Ascending aorta (tissue), 2 donors: ENCODE measurements at regions of chr5 and their contacts with region 1.

Region 1: DNA sequence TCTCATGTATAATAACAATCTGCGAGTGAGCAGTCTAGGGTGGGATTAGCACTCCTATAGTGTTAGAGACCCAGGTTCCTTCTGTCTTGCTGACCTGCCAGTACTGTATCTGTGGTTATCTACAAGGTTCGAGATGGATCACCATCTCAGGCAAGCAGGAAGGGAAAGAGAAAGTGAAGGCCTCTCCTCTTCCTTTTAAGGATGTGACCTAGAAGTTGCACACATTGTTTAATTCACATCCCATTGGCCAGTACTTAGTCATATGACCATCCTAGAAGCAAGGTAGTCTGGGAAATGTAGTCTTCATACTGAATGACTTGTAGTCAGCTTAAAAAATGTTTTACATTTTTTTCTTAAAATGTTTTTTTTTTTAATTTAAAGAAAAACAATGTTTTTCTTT is 168.6 kb downstream of the CARTPT start:
- DNase-seq: no peak
- H3K4me3 ChIP-seq: no peak overlapping the region
- H3K27ac ChIP-seq: peak overlapping the region in 1 of 2 donors; percentile 27
- H3K4me1 ChIP-seq: peaks cover 3 to 10% of the 10 kb centered on the region in 2 donors
- H3K27me3 ChIP-seq: no peaks in the 10 kb centered on the region
- CTCF ChIP-seq: no peak

Region 2: GRCh38 chr5:71830681-71831539 is 56.8 kb before region 1 on chr5:
- intact Hi-C with region 1: loop called (anchors 10 kb)
- DNase-seq: peak; percentile 48 to 95
- H3K4me3 ChIP-seq: peak overlapping the region in 1 of 2 donors; percentile 34
- H3K27ac ChIP-seq: peak overlapping the region; percentile 75 to 92
- H3K4me1 ChIP-seq: peaks cover 6 to 22% of the 10 kb centered on the region in 2 donors
- H3K27me3 ChIP-seq: no peaks in the 10 kb centered on the region
- CTCF ChIP-seq: no peak

Region 3: GRCh38 chr5:71905834-71906711 is 18.4 kb after region 1 on chr5:
- intact Hi-C with region 1: no loop called
- DNase-seq: no peak
- H3K4me3 ChIP-seq: no peak overlapping the region
- H3K27ac ChIP-seq: peak overlapping the region; percentile 30 to 53
- H3K4me1 ChIP-seq: peaks cover 11 to 12% of the 10 kb centered on the region in 2 donors
- H3K27me3 ChIP-seq: no peaks in the 10 kb centered on the region
- CTCF ChIP-seq: no peak